ENCODE measurements at regions of chr1 and their contacts with region 1.

Region 1: DNA sequence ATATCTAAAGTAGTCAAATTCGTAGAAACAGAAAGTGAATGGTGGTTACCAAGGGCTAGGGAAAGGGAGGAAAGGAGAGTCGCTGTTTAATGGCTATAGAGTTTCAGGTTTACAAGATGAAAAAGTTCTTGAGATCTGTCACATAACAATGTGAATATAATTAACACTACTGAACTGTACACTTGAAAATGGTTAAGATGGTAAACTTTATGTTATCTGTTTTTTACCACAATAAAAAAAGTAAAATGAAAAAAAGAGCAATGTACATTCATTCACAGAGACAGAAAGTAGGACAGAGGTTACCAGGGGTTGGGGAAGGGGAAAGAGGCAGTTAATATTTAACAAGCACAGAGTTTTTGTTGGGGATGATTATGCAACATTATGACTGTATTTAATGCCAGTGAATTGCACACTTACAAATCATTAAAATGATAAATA is 53.3 kb upstream of the SEC16B start:
- DNase-seq: no peak
- ATAC-seq: no peak
- H3K4me3 ChIP-seq: no peak overlapping the region
- H3K27ac ChIP-seq: no peak overlapping the region
- H3K4me1 ChIP-seq: peaks cover 0 to 6% (median 0%) of the 10 kb centered on the region in 12 donors
- H3K27me3 ChIP-seq: no peaks in the 10 kb centered on the region
- CTCF ChIP-seq: no peak
- POLR2A ChIP-seq: no peak

Region 2: DNA sequence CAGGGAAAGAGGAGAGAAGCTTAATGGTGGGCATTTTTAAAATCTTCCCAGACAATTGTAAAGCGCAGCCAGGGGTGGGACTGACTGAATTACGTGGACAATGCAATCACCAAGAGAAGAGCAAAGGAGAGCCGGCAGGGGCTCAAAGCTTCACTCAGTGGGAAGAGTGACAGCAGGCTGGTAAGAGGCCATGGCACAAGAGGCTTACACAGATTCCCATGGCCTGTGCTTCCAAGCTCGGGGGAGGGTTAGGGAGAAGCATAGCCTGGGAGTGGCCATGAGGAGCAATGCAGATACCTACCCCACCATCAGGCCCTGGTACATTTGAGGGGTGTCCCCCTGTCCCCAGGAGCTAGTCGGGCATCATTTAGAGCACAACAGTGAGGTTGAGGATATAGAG is 26.2 kb before region 1 on chr1:
- intact Hi-C with region 1: loop called in 1 of 10 experiments (anchors 1 kb)
- DNase-seq: no peak
- ATAC-seq: peak; percentile 36 to 60 (median 51)
- H3K4me3 ChIP-seq: no peak overlapping the region
- H3K27ac ChIP-seq: peak overlapping the region in 1 of 12 donors; percentile 53
- H3K4me1 ChIP-seq: peaks cover 0 to 34% (median 13%) of the 10 kb centered on the region in 12 donors
- H3K27me3 ChIP-seq: no peaks in the 10 kb centered on the region
- CTCF ChIP-seq: no peak
- POLR2A ChIP-seq: no peak

Measured in heart left ventricle (tissue), 16 donors.